Right ventricle myocardium inferior (tissue), 1 donor: ENCODE measurements at regions of chr4 and their contacts with region 1.

Region 1: GRCh38 chr4:25144870-25145481 is 15.3 kb downstream of the SEPSECS start:
- DNase-seq: no peak
- ATAC-seq: no peak

Region 2: GRCh38 chr4:24488399-24489164 is 656.4 kb before region 1 on chr4:
- intact Hi-C with region 1: loop called (anchors 10 kb)
- DNase-seq: peak; percentile 77
- ATAC-seq: peak; percentile 82

Region 3: GRCh38 chr4:24980064-24980690 is 164.8 kb before region 1 on chr4:
- intact Hi-C with region 1: loop called (anchors 1 kb)
- DNase-seq: no peak
- ATAC-seq: peak; percentile 49

Region 4: DNA sequence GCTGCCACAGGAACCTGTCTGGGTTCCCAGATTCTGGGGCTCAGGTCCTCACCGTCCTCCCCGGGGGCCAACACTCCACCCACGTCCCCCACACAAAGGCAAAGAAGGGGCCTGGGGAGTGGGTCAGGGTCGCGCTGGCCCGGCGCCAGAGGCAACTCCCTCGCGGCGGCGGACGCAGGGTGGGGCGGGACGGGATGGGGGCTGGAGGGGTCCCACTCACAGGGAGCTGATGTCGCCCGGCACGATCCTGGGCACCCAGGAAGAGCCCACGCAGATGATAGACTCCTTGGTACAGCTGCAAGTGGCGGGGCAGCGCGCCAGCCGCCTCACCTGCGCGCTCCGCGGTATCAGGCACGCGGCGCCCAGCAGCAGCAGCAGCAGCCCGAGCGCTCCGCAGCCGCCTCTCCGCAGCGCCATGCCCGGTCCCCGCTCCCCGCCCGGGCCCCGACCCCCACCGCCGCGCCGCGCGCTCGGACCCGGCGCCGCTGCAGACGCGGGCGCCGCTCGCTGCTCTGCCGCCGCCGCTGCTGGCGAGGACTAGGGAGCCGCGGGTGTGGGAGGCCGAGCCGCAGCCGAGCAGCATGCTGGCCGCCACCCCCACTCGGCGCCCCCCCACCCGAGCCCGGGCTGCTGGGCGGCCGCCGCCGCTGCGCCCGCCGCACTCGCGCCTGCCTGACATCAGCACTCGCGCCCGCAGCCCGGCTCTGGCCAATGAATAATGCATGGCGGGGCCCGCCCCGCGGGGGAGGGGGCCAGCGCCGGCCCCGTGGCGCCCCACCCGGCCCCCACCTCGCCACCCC is 114.5 kb before region 1 on chr4 and contains the start of gene LGI2:
- intact Hi-C with region 1: loop called (anchors 5 kb)
- DNase-seq: peak; percentile 73
- ATAC-seq: peak; percentile 58
- total RNA-seq, gene LGI2: 3.6 TPM

Region 5: DNA sequence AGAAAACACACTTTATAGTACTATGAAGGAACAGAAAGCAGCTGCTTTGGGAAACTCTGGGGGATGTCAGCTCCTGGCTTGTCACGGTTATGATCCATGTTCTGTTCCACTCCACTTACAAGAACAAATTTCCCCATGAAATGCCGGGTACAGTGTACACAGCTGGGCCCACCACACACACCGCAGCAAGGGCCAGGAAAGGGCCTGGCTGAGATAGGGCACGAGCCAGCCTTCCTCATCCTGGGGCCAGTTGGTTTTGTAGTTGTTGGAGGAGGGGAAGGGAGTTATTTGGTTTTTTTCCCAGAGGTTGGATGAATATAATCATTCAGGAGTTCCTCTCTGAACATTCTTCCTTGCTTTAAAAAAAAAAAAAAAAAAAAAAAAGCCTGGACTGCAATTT is 41.6 kb before region 1 on chr4:
- intact Hi-C with region 1: loop called (anchors 5 kb)
- DNase-seq: no peak
- ATAC-seq: peak; percentile 70